ENCODE measurements at regions of chr12 and their contacts with region 1.

Region 1: DNA sequence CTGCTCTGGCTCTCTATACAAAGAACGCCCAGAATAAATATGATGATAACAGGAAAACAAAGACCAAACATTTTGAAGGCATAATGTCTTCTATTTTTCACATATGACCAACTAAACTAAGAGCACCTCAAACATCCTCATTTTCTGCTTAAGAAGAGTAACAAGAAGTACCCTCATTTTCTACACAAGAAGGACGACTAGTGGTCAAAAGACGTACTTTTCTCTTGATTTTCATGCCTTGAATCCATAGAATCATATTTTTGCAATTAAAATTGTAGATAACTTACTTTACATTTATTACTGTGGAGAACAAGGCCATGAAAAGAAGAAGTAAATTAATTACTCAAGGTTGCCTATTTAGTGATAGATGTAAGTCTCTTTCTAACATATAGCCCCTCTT is 358.6 kb downstream of the DUSP6 start:
- DNase-seq: no peak
- ATAC-seq: peak in 1 of 2 donors; percentile 53

Region 2: GRCh38 chr12:88111074-88111652 is 882.5 kb before region 1 on chr12:
- intact Hi-C with region 1: loop called in 1 of 2 experiments (anchors 10 kb)
- DNase-seq: no peak
- ATAC-seq: no peak

Region 3: DNA sequence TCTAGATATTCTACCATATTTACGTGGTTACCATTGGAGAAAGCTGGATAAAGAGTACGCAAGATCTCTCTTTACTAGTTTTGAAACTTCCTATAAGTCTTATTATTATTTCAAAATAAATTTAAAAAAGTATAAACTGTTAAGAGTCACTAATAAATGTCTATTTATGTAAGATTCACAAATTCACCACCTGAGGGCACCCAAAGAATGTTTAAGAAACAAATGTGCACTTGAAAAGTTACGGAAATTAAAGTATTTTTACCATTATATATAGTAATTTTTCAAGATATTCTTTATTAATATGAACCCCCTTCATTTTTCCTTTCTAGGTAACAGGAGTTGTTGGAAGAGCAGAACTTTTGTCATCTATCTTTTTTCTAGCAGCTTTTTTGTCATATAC is 839.7 kb before region 1 on chr12:
- intact Hi-C with region 1: loop called in 1 of 2 experiments (anchors 5 kb)
- DNase-seq: no peak
- ATAC-seq: no peak

Region 4: GRCh38 chr12:88493636-88494035 is 500.0 kb before region 1 on chr12:
- intact Hi-C with region 1: no loop called
- DNase-seq: no peak
- ATAC-seq: no peak

Region 5: GRCh38 chr12:88580051-88580871 is 413.4 kb before region 1 on chr12 and contains the start of gene KITLG:
- intact Hi-C with region 1: loop called in 1 of 2 experiments (anchors 10 kb)
- DNase-seq: peak; percentile 88
- ATAC-seq: peak; percentile 95 to 97
- total RNA-seq, gene KITLG: 12.0 to 16.7 TPM

Measured in left cardiac atrium (tissue), 4 donors.